Caco-2 (cell line): ENCODE measurements at regions of chr10 and their contacts with region 1.

Region 1: GRCh38 chr10:121500674-121501332 is 97.4 kb downstream of the FGFR2 start:
- DNase-seq: peak; percentile 89 to 94
- H3K4me3 ChIP-seq: no peak overlapping the region
- H3K4me3 Mint-ChIP-seq: peak overlapping the region; percentile 56
- H3K27ac Mint-ChIP-seq: peak overlapping the region; percentile 90
- H3K4me1 ChIP-seq: peaks cover 47% of the 10 kb centered on the region
- H3K4me1 Mint-ChIP-seq: peaks cover 32% of the 10 kb centered on the region
- H3K27me3 ChIP-seq: no peaks in the 10 kb centered on the region
- H3K27me3 Mint-ChIP-seq: no peaks in the 10 kb centered on the region
- CTCF ChIP-seq: no peak

Region 2: GRCh38 chr10:121378251-121378801 is 122.5 kb before region 1 on chr10:
- CTCF ChIA-PET with region 1: no interaction called
- POLR2A ChIA-PET with region 1: no interaction called
- intact Hi-C with region 1: loop called (anchors 2 kb)
- DNase-seq: peak; percentile 62 to 66
- H3K4me3 ChIP-seq: no peak overlapping the region
- H3K4me3 Mint-ChIP-seq: peak overlapping the region; percentile 52
- H3K27ac Mint-ChIP-seq: peak overlapping the region; percentile 88
- H3K4me1 ChIP-seq: peaks cover 70% of the 10 kb centered on the region
- H3K4me1 Mint-ChIP-seq: peaks cover 56% of the 10 kb centered on the region
- H3K27me3 ChIP-seq: no peaks in the 10 kb centered on the region
- H3K27me3 Mint-ChIP-seq: no peaks in the 10 kb centered on the region
- CTCF ChIP-seq: no peak